ENCODE measurements at regions of chr10 and their contacts with region 1.

Region 1: GRCh38 chr10:21292763-21293517 is 232.5 kb downstream of the SKIDA1 start:
- DNase-seq: peak; percentile 98
- H3K4me3 ChIP-seq: peak overlapping the region; percentile 32
- H3K27ac ChIP-seq: peak overlapping the region; percentile 85
- H3K4me1 ChIP-seq: peaks cover 33% of the 10 kb centered on the region
- H3K27me3 ChIP-seq: no peaks in the 10 kb centered on the region
- CTCF ChIP-seq: no peak

Region 2: DNA sequence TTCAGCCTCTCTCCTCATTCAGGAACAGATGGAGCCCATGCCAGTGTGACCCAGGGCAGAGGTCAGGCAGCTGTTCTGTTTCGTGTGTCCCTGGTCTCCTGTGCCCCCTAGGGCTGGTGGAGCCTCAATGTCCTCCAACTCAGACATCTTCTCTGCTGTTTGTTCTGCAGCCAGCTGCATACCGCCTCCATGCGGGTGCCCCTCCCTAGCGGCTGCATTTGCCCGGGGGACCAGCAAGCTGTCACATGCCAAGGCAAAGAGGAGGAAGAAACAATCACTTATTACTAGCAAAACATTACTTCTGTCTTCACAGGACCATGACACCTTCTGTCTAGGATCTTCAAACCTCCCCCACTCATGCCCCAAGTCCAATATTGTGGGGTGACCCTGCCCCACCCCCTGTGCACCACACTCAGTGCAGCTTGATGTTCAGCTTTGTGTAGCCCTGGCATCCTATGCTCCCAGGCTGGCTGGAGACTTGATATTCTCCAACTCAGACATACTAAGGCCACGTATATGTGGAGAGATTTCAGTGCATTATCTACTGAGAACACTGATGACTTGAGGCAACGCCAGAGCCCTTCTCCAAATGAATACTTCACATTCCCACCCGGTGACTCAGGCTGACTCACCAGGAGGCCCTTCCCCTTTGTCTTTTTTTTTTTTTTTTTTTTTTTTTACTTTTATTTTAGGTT is 43.7 kb after region 1 on chr10:
- CTCF ChIA-PET with region 1: no interaction called
- POLR2A ChIA-PET with region 1: no interaction called
- intact Hi-C with region 1: loop called (anchors 5 kb)
- DNase-seq: peak; percentile 88
- H3K4me3 ChIP-seq: no peak overlapping the region
- H3K27ac ChIP-seq: peak overlapping the region; percentile 62
- H3K4me1 ChIP-seq: peaks cover 19% of the 10 kb centered on the region
- H3K27me3 ChIP-seq: no peaks in the 10 kb centered on the region
- CTCF ChIP-seq: 0 out of 2 replicates have a peak, but pooled peaks have one; percentile 16